ENCODE measurements at regions of chr3 and their contacts with region 1.

Region 1: DNA sequence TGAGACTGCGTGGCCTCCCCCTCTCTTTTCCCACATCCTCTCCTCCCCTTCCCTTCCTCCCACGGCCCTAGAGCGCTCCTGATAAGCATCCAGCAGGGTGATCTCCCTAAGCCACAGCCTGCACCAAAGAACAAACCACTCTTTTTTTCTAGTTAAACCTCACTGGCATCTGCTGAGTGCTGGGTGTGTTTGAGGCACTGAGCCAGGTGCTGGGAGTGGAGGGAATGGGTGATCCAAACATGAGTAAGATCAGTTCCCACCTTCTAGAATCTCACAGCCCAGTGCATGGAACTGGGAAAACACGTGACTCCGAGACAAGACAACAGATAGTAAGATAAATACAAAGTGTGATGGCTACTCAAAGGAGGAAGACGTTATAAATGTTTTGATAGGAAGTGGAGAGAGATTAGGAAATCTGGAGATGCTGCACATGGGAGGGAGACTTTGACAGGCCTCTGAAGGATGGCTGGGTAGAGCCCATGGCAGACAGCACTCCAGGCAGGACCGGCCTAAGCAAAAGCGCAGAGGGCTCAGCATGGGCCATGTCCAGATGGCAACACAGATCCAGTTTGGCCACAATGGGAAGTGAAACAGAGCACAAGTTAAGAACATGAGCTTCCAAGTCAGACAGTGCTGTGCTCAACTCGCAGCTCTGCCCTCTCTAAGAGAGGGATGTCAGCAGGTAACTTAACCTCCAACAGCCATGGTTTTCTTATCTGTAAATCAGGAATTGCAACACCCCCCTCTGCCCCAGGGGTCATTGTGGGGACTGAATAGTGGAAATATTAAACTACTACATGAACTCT is 55.6 kb downstream of the CCR3 start:
- DNase-seq: no peak
- H3K4me3 Mint-ChIP-seq: no peak overlapping the region
- H3K27ac Mint-ChIP-seq: no peak overlapping the region
- H3K4me1 Mint-ChIP-seq: peaks cover 78% of the 10 kb centered on the region
- H3K27me3 Mint-ChIP-seq: peaks cover 11% of the 10 kb centered on the region

Region 2: GRCh38 chr3:45665101-45665572 is 632.7 kb before region 1 on chr3:
- CTCF ChIA-PET with region 1: no interaction called
- intact Hi-C with region 1: loop called (anchors 5 kb)
- DNase-seq: peak; percentile 82
- H3K4me3 Mint-ChIP-seq: peak overlapping the region; percentile 84
- H3K27ac Mint-ChIP-seq: peak overlapping the region; percentile 88
- H3K4me1 Mint-ChIP-seq: peaks cover 52% of the 10 kb centered on the region
- H3K27me3 Mint-ChIP-seq: no peaks in the 10 kb centered on the region

Region 3: DNA sequence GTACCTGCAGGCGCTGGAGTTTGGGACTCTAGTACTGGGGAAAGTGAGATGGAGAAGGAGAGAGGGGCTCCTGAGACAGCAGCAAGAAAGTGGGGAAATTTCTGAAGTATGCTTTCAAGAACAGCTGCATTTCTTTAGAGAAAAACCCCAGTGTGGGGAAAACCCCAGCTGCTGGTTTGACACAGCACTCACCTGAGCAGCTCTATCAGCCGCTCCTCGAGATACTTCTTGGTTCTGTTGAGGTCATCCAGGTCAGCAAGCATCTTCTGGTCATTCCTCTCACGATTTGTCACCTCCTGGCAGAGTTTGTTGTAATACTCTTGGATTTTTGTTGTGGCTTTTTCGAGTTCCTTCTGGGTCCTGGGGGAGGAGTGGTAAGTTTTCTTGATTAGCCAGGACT is 335.8 kb before region 1 on chr3:
- CTCF ChIA-PET with region 1: no interaction called
- intact Hi-C with region 1: loop called (anchors 5 kb)
- DNase-seq: peak; percentile 75
- H3K4me3 Mint-ChIP-seq: no peak overlapping the region
- H3K27ac Mint-ChIP-seq: no peak overlapping the region
- H3K4me1 Mint-ChIP-seq: peaks cover 52% of the 10 kb centered on the region
- H3K27me3 Mint-ChIP-seq: no peaks in the 10 kb centered on the region

Region 4: DNA sequence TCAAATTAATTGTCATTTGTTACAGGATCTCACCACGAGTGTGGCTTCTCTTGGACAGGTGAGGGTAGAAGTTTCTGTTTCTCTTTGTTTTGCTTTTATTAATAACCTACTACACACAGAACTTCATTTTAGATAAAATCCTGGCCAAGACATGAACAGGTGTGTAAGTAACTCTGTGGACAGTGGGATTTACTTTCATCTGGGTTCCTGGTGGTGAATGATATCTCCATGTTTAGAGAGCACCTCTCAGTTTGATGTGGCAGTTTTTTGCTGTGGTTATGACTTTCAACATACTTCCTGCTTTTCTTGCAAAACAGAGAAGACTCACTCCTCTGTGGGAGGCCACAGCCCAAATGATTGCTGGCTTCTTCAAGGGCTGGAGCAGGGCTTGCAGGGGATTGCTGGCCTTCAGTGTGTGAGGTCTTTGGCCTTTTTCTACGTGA is 199.5 kb before region 1 on chr3:
- CTCF ChIA-PET with region 1: interaction called, 5 read pairs
- intact Hi-C with region 1: loop called (anchors 1 kb)
- DNase-seq: peak; percentile 69
- H3K4me3 Mint-ChIP-seq: no peak overlapping the region
- H3K27ac Mint-ChIP-seq: peak overlapping the region; percentile 76
- H3K4me1 Mint-ChIP-seq: peaks cover 31% of the 10 kb centered on the region
- H3K27me3 Mint-ChIP-seq: peaks cover 20% of the 10 kb centered on the region

Region 5: DNA sequence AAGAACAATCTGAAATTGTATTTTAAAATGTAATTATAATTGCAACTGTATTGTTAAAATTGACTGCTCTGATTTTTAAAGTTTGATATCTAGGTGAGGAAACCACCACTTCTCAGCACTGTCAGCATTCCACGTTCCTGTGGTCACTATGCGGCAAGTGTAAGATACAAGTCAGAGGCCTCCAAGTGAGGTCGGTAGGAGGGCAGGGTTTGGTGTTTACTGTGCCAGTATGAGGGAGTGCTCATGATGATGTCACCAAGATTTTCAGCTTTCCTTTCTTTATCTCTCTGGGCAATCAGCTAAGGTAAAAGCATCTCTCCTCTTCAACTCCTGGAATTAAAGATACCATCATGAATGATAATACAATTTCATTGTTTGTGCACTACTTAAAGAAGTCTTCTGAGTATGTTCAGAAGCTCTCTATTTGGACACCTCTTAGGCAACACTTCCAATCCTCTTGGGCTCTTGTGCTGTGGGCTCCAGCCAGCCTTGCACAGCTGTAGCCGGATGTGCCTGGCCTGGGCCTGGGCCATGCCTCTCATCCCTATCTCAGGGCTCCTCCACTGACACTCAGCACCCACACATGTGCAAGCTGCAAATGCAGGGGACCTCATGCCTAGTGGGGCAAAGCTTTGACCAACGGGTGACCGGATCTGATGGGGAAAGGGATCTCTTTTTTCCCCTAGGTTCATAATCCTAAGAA is 12.7 kb before region 1 on chr3:
- CTCF ChIA-PET with region 1: interaction called, 5 read pairs
- intact Hi-C with region 1: loop called (anchors 1 kb)
- DNase-seq: peak; percentile 41
- H3K4me3 Mint-ChIP-seq: no peak overlapping the region
- H3K27ac Mint-ChIP-seq: no peak overlapping the region
- H3K4me1 Mint-ChIP-seq: peaks cover 41% of the 10 kb centered on the region
- H3K27me3 Mint-ChIP-seq: peaks cover 8% of the 10 kb centered on the region

Region 6: DNA sequence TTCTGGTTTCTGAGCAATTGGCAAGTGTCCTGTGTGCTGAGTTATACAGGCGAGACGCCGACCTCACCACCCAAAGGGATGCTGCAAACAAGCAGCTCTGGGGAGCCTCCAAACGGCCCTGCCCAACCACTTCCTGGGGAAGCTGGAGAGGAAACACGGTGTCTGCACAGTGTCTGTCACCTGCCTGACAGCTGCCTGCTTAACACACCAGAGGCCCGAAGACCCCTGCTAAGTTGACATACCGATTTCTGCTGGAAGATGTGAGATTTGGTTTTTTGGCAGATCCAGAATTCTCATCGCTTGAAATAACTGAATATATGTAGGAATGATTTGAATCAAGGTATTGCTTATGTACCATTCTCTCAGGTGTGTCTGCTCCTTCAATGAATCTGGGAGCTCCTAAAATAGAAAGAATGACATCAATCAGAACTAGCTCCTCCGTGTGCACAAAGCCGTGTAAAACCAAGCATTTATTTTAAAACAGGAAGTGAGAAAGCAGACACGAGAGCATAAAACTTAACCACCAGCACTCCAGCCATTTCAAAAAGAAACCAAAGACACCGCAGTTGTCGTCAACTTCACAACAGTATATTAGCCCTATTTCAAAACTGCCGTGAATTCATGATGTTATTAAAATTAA is 241.1 kb after region 1 on chr3:
- CTCF ChIA-PET with region 1: no interaction called
- intact Hi-C with region 1: loop called (anchors 1 kb)
- DNase-seq: peak; percentile 90
- H3K4me3 Mint-ChIP-seq: peak overlapping the region; percentile 54
- H3K27ac Mint-ChIP-seq: peak overlapping the region; percentile 78
- H3K4me1 Mint-ChIP-seq: peaks cover 58% of the 10 kb centered on the region
- H3K27me3 Mint-ChIP-seq: no peaks in the 10 kb centered on the region

Region 7: GRCh38 chr3:46578973-46579755 is 281.3 kb after region 1 on chr3:
- CTCF ChIA-PET with region 1: no interaction called
- intact Hi-C with region 1: no loop called
- DNase-seq: no peak
- H3K4me3 Mint-ChIP-seq: no peak overlapping the region
- H3K27ac Mint-ChIP-seq: no peak overlapping the region
- H3K4me1 Mint-ChIP-seq: peaks cover 4% of the 10 kb centered on the region
- H3K27me3 Mint-ChIP-seq: no peaks in the 10 kb centered on the region